Activated CD4-positive, alpha-beta memory T cell treated with anti-CD3 and anti-CD28 coated beads for 36 hours (primary cell): ENCODE measurements at regions of chr1 and their contacts with region 1.

Region 1: GRCh38 chr1:227762233-227762911 is 27.1 kb downstream of the SNAP47 start:
- DNase-seq: peak; percentile 92
- H3K4me3 Mint-ChIP-seq: peak overlapping the region; percentile 23
- H3K27ac Mint-ChIP-seq: peak overlapping the region; percentile 56
- H3K4me1 Mint-ChIP-seq: peaks cover 98% of the 10 kb centered on the region
- H3K27me3 Mint-ChIP-seq: no peaks in the 10 kb centered on the region

Region 2: DNA sequence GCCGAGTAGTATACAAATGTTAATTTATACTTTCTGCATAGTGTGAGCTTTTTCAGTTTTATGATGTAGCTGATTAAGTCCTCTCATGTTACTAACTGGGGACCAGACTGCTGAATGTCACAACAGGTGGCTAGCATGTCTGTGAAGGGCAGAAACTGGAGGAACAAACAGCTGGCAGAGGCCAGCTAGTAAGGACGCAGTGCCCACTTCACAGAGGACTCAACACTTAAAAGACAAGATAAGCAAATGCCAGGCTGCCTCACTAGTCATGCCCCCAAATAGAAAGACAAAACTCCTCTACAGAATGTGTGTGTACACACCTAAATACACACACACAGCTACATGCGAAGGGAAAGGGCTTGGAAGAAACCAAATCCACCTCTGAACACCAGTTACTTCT is 272.8 kb before region 1 on chr1:
- CTCF ChIA-PET with region 1: no interaction called
- POLR2A ChIA-PET with region 1: no interaction called
- intact Hi-C with region 1: loop called (anchors 10 kb)
- DNase-seq: no peak
- H3K4me3 Mint-ChIP-seq: no peak overlapping the region
- H3K27ac Mint-ChIP-seq: no peak overlapping the region
- H3K4me1 Mint-ChIP-seq: no peaks in the 10 kb centered on the region
- H3K27me3 Mint-ChIP-seq: no peaks in the 10 kb centered on the region

Region 3: DNA sequence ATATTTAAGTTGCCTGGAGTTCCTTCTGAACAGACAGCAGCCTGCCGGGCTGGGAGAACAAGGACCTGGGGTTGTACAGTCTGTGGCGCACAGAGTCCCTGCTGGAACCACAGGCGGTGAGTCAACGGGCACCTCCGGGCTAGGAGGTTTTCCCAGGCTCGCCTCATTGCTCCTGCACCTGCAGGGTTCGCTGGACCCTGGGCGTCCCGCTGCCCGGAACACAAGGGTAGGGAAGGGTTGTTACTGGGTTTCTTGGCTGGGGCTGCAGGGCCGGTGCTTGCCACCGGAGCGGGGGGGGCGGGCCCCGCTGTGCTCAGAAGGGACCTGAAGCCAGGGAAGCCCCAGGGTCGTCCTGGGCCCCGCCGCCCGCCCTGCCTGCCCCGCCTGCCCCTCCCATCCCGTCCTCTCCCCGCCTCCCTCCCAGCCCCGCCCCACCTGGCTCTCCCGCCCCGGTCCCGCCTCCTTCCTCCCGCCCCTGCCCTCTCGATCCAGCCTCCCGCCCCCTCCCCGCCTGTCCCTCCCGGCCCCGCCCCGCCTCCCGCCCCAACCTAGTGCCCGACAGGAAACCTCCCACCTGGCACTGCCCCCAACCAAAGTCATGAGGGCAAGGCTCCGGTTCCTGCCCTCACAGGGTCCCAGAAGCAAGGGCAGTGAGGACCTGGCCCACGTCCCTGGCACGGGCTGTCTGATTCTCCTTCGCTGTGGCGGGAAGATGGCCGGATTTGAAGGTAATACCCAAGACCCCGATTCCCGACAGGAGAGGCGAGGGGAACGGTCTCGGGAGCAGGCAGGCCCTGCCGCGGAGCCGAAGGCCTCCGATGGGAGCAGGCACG is 34.1 kb before region 1 on chr1:
- CTCF ChIA-PET with region 1: interaction called, 14 read pairs
- POLR2A ChIA-PET with region 1: no interaction called
- intact Hi-C with region 1: no loop called
- DNase-seq: peak; percentile 86
- H3K4me3 Mint-ChIP-seq: peak overlapping the region; percentile 85
- H3K27ac Mint-ChIP-seq: peak overlapping the region; percentile 79
- H3K4me1 Mint-ChIP-seq: peaks cover 21% of the 10 kb centered on the region
- H3K27me3 Mint-ChIP-seq: peaks cover 4% of the 10 kb centered on the region

Region 4: GRCh38 chr1:227748496-227749182 is 13.7 kb before region 1 on chr1:
- CTCF ChIA-PET with region 1: interaction called, 7 read pairs
- POLR2A ChIA-PET with region 1: interaction called, 4 read pairs
- intact Hi-C with region 1: loop called (anchors 1 kb)
- DNase-seq: peak; percentile 75
- H3K4me3 Mint-ChIP-seq: peak overlapping the region; percentile 33
- H3K27ac Mint-ChIP-seq: peak overlapping the region; percentile 94
- H3K4me1 Mint-ChIP-seq: peaks cover 45% of the 10 kb centered on the region
- H3K27me3 Mint-ChIP-seq: no peaks in the 10 kb centered on the region

Region 5: GRCh38 chr1:227886993-227887696 is 124.8 kb after region 1 on chr1:
- CTCF ChIA-PET with region 1: no interaction called
- POLR2A ChIA-PET with region 1: no interaction called
- intact Hi-C with region 1: loop called (anchors 10 kb)
- DNase-seq: peak; percentile 40
- H3K4me3 Mint-ChIP-seq: no peak overlapping the region
- H3K27ac Mint-ChIP-seq: no peak overlapping the region
- H3K4me1 Mint-ChIP-seq: peaks cover 22% of the 10 kb centered on the region
- H3K27me3 Mint-ChIP-seq: no peaks in the 10 kb centered on the region

Region 6: GRCh38 chr1:227946624-227947385 is 184.4 kb after region 1 on chr1:
- CTCF ChIA-PET with region 1: interaction called, 106 read pairs
- POLR2A ChIA-PET with region 1: no interaction called
- intact Hi-C with region 1: loop called (anchors 1 kb)
- DNase-seq: peak; percentile 73
- H3K4me3 Mint-ChIP-seq: peak overlapping the region; percentile 68
- H3K27ac Mint-ChIP-seq: no peak overlapping the region
- H3K4me1 Mint-ChIP-seq: peaks cover 6% of the 10 kb centered on the region
- H3K27me3 Mint-ChIP-seq: peaks cover 15% of the 10 kb centered on the region

Region 7: DNA sequence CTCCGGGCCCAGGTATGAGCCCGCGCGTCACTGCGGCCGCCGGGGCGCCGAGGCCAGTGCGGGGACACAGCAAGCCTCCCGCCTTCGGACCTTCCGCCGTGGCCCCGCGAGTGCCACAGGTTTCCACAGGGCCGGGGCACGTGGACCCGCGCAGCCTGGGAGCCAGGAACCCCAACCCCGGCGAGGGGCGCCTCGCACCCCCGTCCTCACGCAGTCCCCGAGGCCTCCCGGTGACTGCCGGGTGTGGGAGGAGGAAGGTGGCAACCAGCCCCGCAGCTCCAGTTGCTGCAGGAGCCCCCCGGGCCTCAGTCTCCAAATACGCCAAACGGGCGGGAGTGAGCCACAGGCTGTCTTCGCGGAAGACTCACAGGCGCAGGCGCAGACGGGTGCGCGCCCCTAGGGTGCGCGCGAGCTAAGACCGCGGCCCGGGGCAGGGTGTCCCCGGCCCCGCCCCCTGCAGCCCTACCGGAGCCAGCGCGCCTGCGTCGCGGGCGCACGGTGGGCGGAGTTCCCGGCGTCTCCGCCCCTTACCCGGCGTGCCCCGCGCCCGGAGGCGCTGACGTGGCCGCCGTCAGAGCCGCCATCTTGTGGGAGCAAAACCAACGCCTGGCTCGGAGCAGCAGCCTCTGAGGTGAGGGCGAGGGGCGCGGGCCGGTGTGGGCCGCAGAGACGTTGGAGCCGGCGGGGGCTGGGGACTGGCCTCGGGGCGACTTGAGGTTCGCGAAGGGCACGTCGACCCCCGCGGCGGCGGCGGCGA is 319.9 kb after region 1 on chr1 and contains the start of gene ARF1:
- CTCF ChIA-PET with region 1: no interaction called
- POLR2A ChIA-PET with region 1: interaction called, 3 read pairs
- intact Hi-C with region 1: loop called (anchors 2 kb)
- DNase-seq: peak; percentile 93
- H3K4me3 Mint-ChIP-seq: peak within 1 kb of the TSS; percentile 91
- H3K27ac Mint-ChIP-seq: peak within 1 kb of the TSS; percentile 96
- H3K4me1 Mint-ChIP-seq: peaks cover 37% of the 10 kb centered on the region
- H3K27me3 Mint-ChIP-seq: no peaks in the 10 kb centered on the region
- total RNA-seq, gene ARF1: 346 to 355 TPM

Region 8: GRCh38 chr1:228109073-228109961 is 346.9 kb after region 1 on chr1 and contains the start of gene MRPL55:
- CTCF ChIA-PET with region 1: no interaction called
- POLR2A ChIA-PET with region 1: no interaction called
- intact Hi-C with region 1: no loop called
- DNase-seq: peak; percentile 99
- H3K4me3 Mint-ChIP-seq: peak within 1 kb of the TSS; percentile 89
- H3K27ac Mint-ChIP-seq: peak within 1 kb of the TSS; percentile 84
- H3K4me1 Mint-ChIP-seq: peaks cover 25% of the 10 kb centered on the region
- H3K27me3 Mint-ChIP-seq: no peaks in the 10 kb centered on the region
- total RNA-seq, gene MRPL55: 51.1 to 52.7 TPM